Activated B cell treated with CpG ODN at 0.5 μM for 24 hours (primary cell): ENCODE measurements at regions of chr4 and their contacts with region 1.

Region 1: GRCh38 chr4:139734875-139735380 is 69.3 kb downstream of the MGST2 start:
- DNase-seq: peak; percentile 66
- ATAC-seq: peak; percentile 87
- H3K4me3 Mint-ChIP-seq: peak overlapping the region; percentile 76
- H3K27ac Mint-ChIP-seq: no peak overlapping the region
- H3K4me1 Mint-ChIP-seq: peaks cover 15% of the 10 kb centered on the region
- H3K27me3 Mint-ChIP-seq: peaks cover 13% of the 10 kb centered on the region
- CTCF ChIP-seq: no peak

Region 2: GRCh38 chr4:139715746-139716391 is 19.1 kb before region 1 on chr4:
- CTCF ChIA-PET with region 1: no interaction called
- POLR2A ChIA-PET with region 1: no interaction called
- intact Hi-C with region 1: no loop called
- DNase-seq: no peak
- ATAC-seq: no peak
- H3K4me3 Mint-ChIP-seq: no peak overlapping the region
- H3K27ac Mint-ChIP-seq: no peak overlapping the region
- H3K4me1 Mint-ChIP-seq: no peaks in the 10 kb centered on the region
- H3K27me3 Mint-ChIP-seq: no peaks in the 10 kb centered on the region
- CTCF ChIP-seq: no peak

Region 3: GRCh38 chr4:139950568-139950967 is 215.6 kb after region 1 on chr4:
- CTCF ChIA-PET with region 1: no interaction called
- POLR2A ChIA-PET with region 1: no interaction called
- intact Hi-C with region 1: loop called (anchors 1 kb)
- DNase-seq: peak; percentile 17
- ATAC-seq: peak; percentile 90
- H3K4me3 Mint-ChIP-seq: no peak overlapping the region
- H3K27ac Mint-ChIP-seq: peak overlapping the region; percentile 9
- H3K4me1 Mint-ChIP-seq: peaks cover 35% of the 10 kb centered on the region
- H3K27me3 Mint-ChIP-seq: peaks cover 10% of the 10 kb centered on the region
- CTCF ChIP-seq: no peak

Region 4: GRCh38 chr4:140049024-140049848 is 314.3 kb after region 1 on chr4:
- CTCF ChIA-PET with region 1: interaction called, 8 read pairs
- POLR2A ChIA-PET with region 1: no interaction called
- intact Hi-C with region 1: loop called (anchors 2 kb)
- DNase-seq: no peak
- ATAC-seq: peak; percentile 81
- H3K4me3 Mint-ChIP-seq: peak overlapping the region; percentile 74
- H3K27ac Mint-ChIP-seq: peak overlapping the region; percentile 33
- H3K4me1 Mint-ChIP-seq: peaks cover 33% of the 10 kb centered on the region
- H3K27me3 Mint-ChIP-seq: peaks cover 14% of the 10 kb centered on the region
- CTCF ChIP-seq: no peak

Region 5: GRCh38 chr4:140326395-140326993 is 591.6 kb after region 1 on chr4:
- CTCF ChIA-PET with region 1: interaction called, 3 read pairs
- POLR2A ChIA-PET with region 1: no interaction called
- intact Hi-C with region 1: loop called (anchors 1 kb)
- DNase-seq: no peak
- ATAC-seq: no peak
- H3K4me3 Mint-ChIP-seq: no peak overlapping the region
- H3K27ac Mint-ChIP-seq: no peak overlapping the region
- H3K4me1 Mint-ChIP-seq: peaks cover 10% of the 10 kb centered on the region
- H3K27me3 Mint-ChIP-seq: peaks cover 14% of the 10 kb centered on the region
- CTCF ChIP-seq: no peak

Region 6: GRCh38 chr4:140609548-140610425 is 874.9 kb after region 1 on chr4:
- CTCF ChIA-PET with region 1: interaction called, 4 read pairs
- POLR2A ChIA-PET with region 1: no interaction called
- intact Hi-C with region 1: loop called (anchors 5 kb)
- DNase-seq: no peak
- ATAC-seq: peak; percentile 83
- H3K4me3 Mint-ChIP-seq: no peak overlapping the region
- H3K27ac Mint-ChIP-seq: no peak overlapping the region
- H3K4me1 Mint-ChIP-seq: peaks cover 12% of the 10 kb centered on the region
- H3K27me3 Mint-ChIP-seq: peaks cover 8% of the 10 kb centered on the region
- CTCF ChIP-seq: peak; percentile 49